Transverse colon (tissue), 4 donors: ENCODE measurements at regions of chr4 and their contacts with region 1.

Region 1: DNA sequence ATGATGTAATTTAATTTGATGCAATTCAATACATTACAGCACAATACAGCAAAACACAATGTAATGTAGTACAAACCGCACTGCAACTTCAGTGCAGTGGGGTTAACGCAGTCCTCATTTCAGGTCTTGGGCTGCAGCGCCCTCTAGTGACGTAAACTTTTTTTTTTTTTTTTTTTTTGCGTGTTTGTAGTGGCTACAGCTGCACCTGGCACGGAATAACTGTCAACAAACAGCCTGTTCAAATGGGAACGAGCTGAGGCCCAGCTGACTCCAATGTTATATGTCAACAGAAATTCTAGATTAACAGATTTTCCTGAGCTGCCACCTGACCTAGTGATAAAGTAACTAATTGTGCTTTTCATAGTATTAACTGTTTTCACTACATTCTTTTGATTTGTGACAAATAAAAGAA is 33.5 kb upstream of the RASSF6 start:
- DNase-seq: peak; percentile 33
- H3K4me3 ChIP-seq: no peak overlapping the region
- H3K27ac ChIP-seq: no peak overlapping the region
- H3K4me1 ChIP-seq: peaks cover 0 to 4% (median 0%) of the 10 kb centered on the region in 4 donors
- H3K27me3 ChIP-seq: no peaks in the 10 kb centered on the region
- CTCF ChIP-seq: peak; percentile 53 to 80 (median 63)
- EP300 ChIP-seq: no peak
- POLR2A ChIP-seq: no peak

Region 2: GRCh38 chr4:73308286-73308685 is 345.4 kb before region 1 on chr4:
- in situ Hi-C with region 1: loop called in 2 of 4 experiments (anchors 25 kb)
- intact Hi-C with region 1: no loop called
- DNase-seq: no peak
- H3K4me3 ChIP-seq: no peak overlapping the region
- H3K27ac ChIP-seq: no peak overlapping the region
- H3K4me1 ChIP-seq: no peaks in the 10 kb centered on the region
- H3K27me3 ChIP-seq: no peaks in the 10 kb centered on the region
- CTCF ChIP-seq: peak in 1 of 5 experiments; percentile 5
- EP300 ChIP-seq: no peak
- POLR2A ChIP-seq: no peak

Region 3: DNA sequence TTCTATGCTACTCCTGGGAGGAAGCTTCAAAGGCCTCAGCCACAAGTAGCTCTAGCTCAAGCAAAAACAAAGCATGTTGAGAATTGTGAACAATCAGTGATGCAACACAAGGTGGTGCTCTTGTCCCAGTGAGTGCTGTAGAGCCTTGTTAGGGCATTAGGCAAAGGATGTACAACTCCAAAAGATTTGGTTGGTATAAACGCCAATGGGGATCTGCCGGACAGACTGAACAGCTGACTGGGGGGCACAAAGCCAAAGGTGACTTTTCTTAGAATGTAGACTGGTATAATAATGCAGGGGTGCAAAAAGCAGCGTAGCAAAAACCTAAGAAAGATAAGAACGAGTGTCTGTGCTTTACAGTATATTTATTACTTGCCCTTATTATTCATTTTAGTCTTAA is 312.2 kb before region 1 on chr4:
- in situ Hi-C with region 1: loop called in 1 of 4 experiments (anchors 10 kb)
- intact Hi-C with region 1: no loop called
- DNase-seq: peak; percentile 18
- H3K4me3 ChIP-seq: no peak overlapping the region
- H3K27ac ChIP-seq: no peak overlapping the region
- H3K4me1 ChIP-seq: peaks cover 0 to 7% (median 0%) of the 10 kb centered on the region in 4 donors
- H3K27me3 ChIP-seq: no peaks in the 10 kb centered on the region
- CTCF ChIP-seq: peak in 4 of 5 experiments; percentile 40 to 53 (median 46)
- EP300 ChIP-seq: no peak
- POLR2A ChIP-seq: no peak

Region 4: GRCh38 chr4:73573794-73574406 is 79.8 kb before region 1 on chr4:
- in situ Hi-C with region 1: loop called in 3 of 4 experiments (anchors 5 to 10 kb)
- intact Hi-C with region 1: loop called (anchors 5 kb)
- DNase-seq: peak; percentile 66
- H3K4me3 ChIP-seq: no peak overlapping the region
- H3K27ac ChIP-seq: no peak overlapping the region
- H3K4me1 ChIP-seq: no peaks in the 10 kb centered on the region
- H3K27me3 ChIP-seq: no peaks in the 10 kb centered on the region
- CTCF ChIP-seq: peak; percentile 69 to 75 (median 72)
- EP300 ChIP-seq: no peak
- POLR2A ChIP-seq: no peak

Region 5: GRCh38 chr4:74543231-74543670 is 889.5 kb after region 1 on chr4:
- in situ Hi-C with region 1: no loop called
- intact Hi-C with region 1: no loop called
- DNase-seq: no peak
- H3K4me3 ChIP-seq: no peak overlapping the region
- H3K27ac ChIP-seq: peak overlapping the region; percentile 33 to 70 (median 60)
- H3K4me1 ChIP-seq: peaks cover 16 to 68% (median 32%) of the 10 kb centered on the region in 4 donors
- H3K27me3 ChIP-seq: no peaks in the 10 kb centered on the region
- CTCF ChIP-seq: no peak
- EP300 ChIP-seq: no peak
- POLR2A ChIP-seq: no peak